ENCODE measurements at regions of chr16 and their contacts with region 1.

Region 1: DNA sequence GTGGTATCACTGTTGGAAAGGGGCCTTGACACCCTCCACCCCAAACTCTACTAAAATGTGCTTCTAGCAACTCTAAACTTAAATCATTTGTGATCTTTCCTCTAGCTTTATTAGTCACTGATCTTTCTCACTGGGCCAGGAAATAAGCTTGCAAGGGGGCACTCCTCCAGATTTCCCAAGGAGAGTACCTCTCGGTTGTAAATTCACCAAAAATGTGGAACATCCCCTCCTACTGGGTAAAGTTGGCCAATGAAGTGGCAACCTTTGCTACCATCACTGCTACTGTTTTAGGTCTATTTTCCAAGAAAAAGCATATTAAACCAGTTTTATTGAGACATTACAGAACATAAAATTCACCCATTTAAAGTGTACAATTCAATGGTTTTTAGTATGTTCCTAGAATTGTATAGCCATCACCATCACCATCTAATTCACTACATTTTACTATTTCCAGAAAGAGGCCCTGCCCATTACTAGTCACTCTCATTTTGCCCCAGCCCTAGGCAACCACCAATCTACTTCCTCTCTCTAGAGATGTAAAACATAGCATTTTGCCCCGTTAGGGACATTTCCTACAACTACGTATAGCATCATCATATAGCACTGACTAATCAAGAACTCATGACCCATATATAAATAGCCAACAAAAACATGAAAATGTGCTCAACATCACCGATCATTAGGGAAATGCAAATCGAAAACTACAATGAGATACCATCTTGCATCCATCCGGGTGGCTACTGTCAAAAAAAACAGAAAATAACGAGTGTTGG is 44.6 kb upstream of the ADCY9 start:
- DNase-seq: no peak
- ATAC-seq: no peak
- H3K4me3 ChIP-seq: no peak overlapping the region
- H3K27ac ChIP-seq: no peak overlapping the region
- H3K4me1 ChIP-seq: no peaks in the 10 kb centered on the region
- H3K27me3 ChIP-seq: no peaks in the 10 kb centered on the region
- CTCF ChIP-seq: no peak

Region 2: DNA sequence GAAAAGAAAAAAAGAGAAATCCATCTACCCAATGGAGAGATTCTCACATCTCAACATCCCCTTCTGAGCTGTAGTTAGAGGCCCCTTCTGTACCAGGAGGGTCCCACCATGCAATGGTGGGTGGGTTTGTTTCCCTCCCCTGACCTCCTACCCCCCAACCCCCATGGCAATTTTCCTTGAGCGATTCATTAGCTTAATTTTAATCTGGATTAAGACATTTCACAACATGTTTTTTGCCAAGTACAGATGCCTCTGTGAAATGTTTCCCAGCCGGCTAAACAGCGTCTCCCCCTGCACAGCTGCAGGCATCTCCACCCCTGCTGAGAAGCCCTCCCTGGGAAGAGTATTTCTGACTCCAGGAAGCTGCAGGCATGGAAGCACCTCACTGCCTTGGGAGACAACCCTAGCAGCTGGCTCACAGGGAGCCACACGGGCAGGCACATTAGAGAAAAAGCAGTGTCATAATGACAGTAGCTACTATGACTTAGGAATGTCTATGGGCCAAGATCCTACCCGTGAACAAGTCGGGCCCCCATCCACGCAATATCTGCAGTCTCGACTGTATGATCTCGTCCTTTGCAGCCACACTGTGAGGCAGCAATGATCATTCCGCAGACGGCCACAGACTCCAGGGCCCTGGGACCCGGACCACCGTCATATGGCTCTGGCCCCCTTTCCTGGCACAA is 161.9 kb before region 1 on chr16:
- CTCF ChIA-PET with region 1: no interaction called
- POLR2A ChIA-PET with region 1: interaction called, 18 read pairs
- in situ Hi-C with region 1: no loop called
- intact Hi-C with region 1: no loop called
- DNase-seq: no peak
- ATAC-seq: no peak
- H3K4me3 ChIP-seq: no peak overlapping the region
- H3K27ac ChIP-seq: no peak overlapping the region
- H3K4me1 ChIP-seq: 0 out of 2 replicates have a peak, but pooled peaks cover 3% of the 10 kb centered on the region
- H3K27me3 ChIP-seq: no peaks in the 10 kb centered on the region
- CTCF ChIP-seq: no peak

Region 3: GRCh38 chr16:4032768-4033167 is 128.1 kb before region 1 on chr16:
- CTCF ChIA-PET with region 1: no interaction called
- POLR2A ChIA-PET with region 1: no interaction called
- in situ Hi-C with region 1: no loop called
- intact Hi-C with region 1: no loop called
- DNase-seq: no peak
- ATAC-seq: no peak
- H3K4me3 ChIP-seq: no peak overlapping the region
- H3K27ac ChIP-seq: no peak overlapping the region
- H3K4me1 ChIP-seq: no peaks in the 10 kb centered on the region
- H3K27me3 ChIP-seq: no peaks in the 10 kb centered on the region
- CTCF ChIP-seq: no peak

Measured in Panc1 (cell line).